ENCODE measurements at regions of chr4 and their contacts with region 1.

Region 1: GRCh38 chr4:109315818-109316217 is 13.4 kb upstream of the COL25A1 start:
- DNase-seq: no peak
- H3K4me3 ChIP-seq: no peak overlapping the region
- H3K27ac ChIP-seq: no peak overlapping the region
- H3K27me3 ChIP-seq: no peaks in the 10 kb centered on the region
- CTCF ChIP-seq: peak; percentile 43

Region 2: GRCh38 chr4:108834835-108835384 is 480.9 kb before region 1 on chr4:
- CTCF ChIA-PET with region 1: interaction called, 11 read pairs
- POLR2A ChIA-PET with region 1: no interaction called
- DNase-seq: peak; percentile 32
- H3K4me3 ChIP-seq: no peak overlapping the region
- H3K27ac ChIP-seq: no peak overlapping the region
- H3K27me3 ChIP-seq: no peaks in the 10 kb centered on the region
- CTCF ChIP-seq: peak; percentile 85